Stomach (tissue), 19 donors: ENCODE measurements at regions of chrX and their contacts with region 1.

Region 1: GRCh38 chrX:135086197-135086854 is 34.0 kb downstream of the ETDB start:
- DNase-seq: peak; percentile 31 to 87
- H3K4me3 ChIP-seq: no peak overlapping the region
- H3K27ac ChIP-seq: no peak overlapping the region
- H3K4me1 ChIP-seq: no peaks in the 10 kb centered on the region
- H3K27me3 ChIP-seq: peaks cover 0 to 6% (median 0%) of the 10 kb centered on the region in 3 donors
- CTCF ChIP-seq: peak in 5 of 7 experiments; percentile 5 to 47 (median 38)
- EP300 ChIP-seq: no peak
- POLR2A ChIP-seq: no peak

Region 2: GRCh38 chrX:134969726-134970125 is 116.6 kb before region 1 on chrX:
- intact Hi-C with region 1: loop called (anchors 10 kb)
- DNase-seq: peak in 1 of 2 donors; percentile 21
- H3K4me3 ChIP-seq: no peak overlapping the region
- H3K27ac ChIP-seq: no peak overlapping the region
- H3K4me1 ChIP-seq: no peaks in the 10 kb centered on the region
- H3K27me3 ChIP-seq: no peaks in the 10 kb centered on the region
- CTCF ChIP-seq: no peak
- EP300 ChIP-seq: no peak
- POLR2A ChIP-seq: no peak